ENCODE measurements at regions of chr22 and their contacts with region 1.

Region 1: GRCh38 chr22:37933711-37934376 is 19.6 kb downstream of the C22orf23 start:
- DNase-seq: peak; percentile 87 to 94 (median 92)
- ATAC-seq: peak; percentile 93 to 98 (median 96)
- H3K4me3 ChIP-seq: no peak overlapping the region
- H3K27ac ChIP-seq: peak overlapping the region in 11 of 12 donors; percentile 16 to 80 (median 60)
- H3K4me1 ChIP-seq: peaks cover 6 to 40% (median 14%) of the 10 kb centered on the region in 12 donors
- H3K27me3 ChIP-seq: no peaks in the 10 kb centered on the region
- CTCF ChIP-seq: peak; percentile 88 to 99 (median 95)
- POLR2A ChIP-seq: no peak

Region 2: DNA sequence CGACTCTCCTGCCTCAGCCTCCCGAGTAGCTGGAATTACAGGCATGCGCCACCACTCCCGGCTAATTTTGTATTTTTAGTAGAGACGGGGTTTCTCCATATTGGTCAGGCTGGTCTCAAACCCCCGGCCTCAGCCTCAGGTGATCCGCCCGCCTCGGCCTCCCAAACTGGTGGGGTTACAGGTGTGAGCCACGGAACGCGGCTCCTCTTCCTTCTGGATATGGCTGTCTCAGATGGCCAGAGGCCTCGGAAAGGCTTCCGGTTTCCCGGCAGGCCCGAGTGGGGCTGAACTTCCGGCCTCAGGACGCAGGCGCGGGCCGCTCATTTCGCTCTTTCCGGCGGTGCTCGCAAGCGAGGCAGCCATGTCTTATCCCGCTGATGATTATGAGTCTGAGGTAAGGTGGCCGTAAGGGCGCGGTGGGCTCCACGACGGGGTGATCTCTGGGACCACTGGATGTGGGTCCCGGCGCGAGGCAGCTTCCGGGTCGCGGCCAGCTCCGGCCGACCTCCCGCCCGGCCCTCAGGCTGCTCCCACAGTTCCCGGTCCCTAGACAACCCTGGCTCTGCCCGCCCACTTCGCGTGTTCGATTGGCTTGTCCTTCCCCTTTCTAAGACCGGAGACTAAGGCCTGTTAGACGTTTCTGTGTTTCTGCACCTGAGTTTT is 84.6 kb before region 1 on chr22 and contains the start of gene EIF3L:
- intact Hi-C with region 1: no loop called
- DNase-seq: peak; percentile 92 to 94 (median 92)
- ATAC-seq: peak; percentile 82 to 92 (median 92)
- H3K4me3 ChIP-seq: peak within 1 kb of the TSS; percentile 62 to 98 (median 80)
- H3K27ac ChIP-seq: peak within 1 kb of the TSS; percentile 63 to 96 (median 84)
- H3K4me1 ChIP-seq: peaks cover 0 to 37% (median 22%) of the 10 kb centered on the region in 12 donors
- H3K27me3 ChIP-seq: no peaks in the 10 kb centered on the region
- CTCF ChIP-seq: no peak
- POLR2A ChIP-seq: peak; percentile 27 to 84
- total RNA-seq, gene EIF3L: 237 to 456 (median 369) TPM

Region 3: GRCh38 chr22:37884420-37884819 is 49.4 kb before region 1 on chr22:
- intact Hi-C with region 1: no loop called
- DNase-seq: no peak
- ATAC-seq: no peak
- H3K4me3 ChIP-seq: no peak overlapping the region
- H3K27ac ChIP-seq: peak overlapping the region in 1 of 12 donors; percentile 83
- H3K4me1 ChIP-seq: peaks cover 0 to 13% (median 0%) of the 10 kb centered on the region in 12 donors
- H3K27me3 ChIP-seq: no peaks in the 10 kb centered on the region
- CTCF ChIP-seq: no peak
- POLR2A ChIP-seq: no peak

Region 4: GRCh38 chr22:37905534-37906363 is 28.1 kb before region 1 on chr22 and contains the start of gene MICALL1:
- intact Hi-C with region 1: loop called in 2 of 10 experiments (anchors 1 to 2 kb)
- DNase-seq: peak; percentile 74 to 88 (median 79)
- ATAC-seq: peak; percentile 47 to 89 (median 77)
- H3K4me3 ChIP-seq: peak within 1 kb of the TSS; percentile 52 to 98 (median 68)
- H3K27ac ChIP-seq: peak within 1 kb of the TSS; percentile 71 to 92 (median 87)
- H3K4me1 ChIP-seq: peaks cover 0 to 44% (median 19%) of the 10 kb centered on the region in 12 donors
- H3K27me3 ChIP-seq: no peaks in the 10 kb centered on the region
- CTCF ChIP-seq: peak in 6 of 12 donors; percentile 32 to 50 (median 41)
- POLR2A ChIP-seq: peak in 1 of 2 donors; percentile 39
- total RNA-seq, gene MICALL1: 15.8 to 40.7 (median 17.8) TPM

Measured in heart left ventricle (tissue), 16 donors.